ENCODE measurements at regions of chr12 and their contacts with region 1.

Region 1: DNA sequence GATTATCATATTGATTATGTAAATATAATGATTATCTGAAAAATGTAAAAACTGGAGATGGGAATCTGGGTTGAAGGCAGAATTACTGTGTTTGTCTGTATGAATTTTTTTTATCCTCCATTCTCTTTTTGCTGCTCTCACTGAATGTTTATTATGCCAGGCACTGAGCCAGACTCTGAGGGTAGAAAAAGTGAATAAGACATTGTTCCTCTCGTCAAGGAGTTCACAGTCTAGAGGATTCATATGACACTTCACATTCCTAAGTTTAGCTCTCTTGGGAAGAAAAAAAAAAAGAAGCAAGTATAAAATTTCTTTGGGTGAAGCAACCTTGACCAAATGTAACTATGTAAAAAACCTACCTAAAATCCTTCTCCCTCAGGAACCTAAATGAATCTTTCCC is 120.9 kb upstream of the LMO3 start:
- DNase-seq: peak; percentile 92
- H3K4me3 ChIP-seq: no peak overlapping the region
- H3K27ac ChIP-seq: peak overlapping the region; percentile 97
- H3K4me1 ChIP-seq: peaks cover 26% of the 10 kb centered on the region
- H3K27me3 ChIP-seq: no peaks in the 10 kb centered on the region
- CTCF ChIP-seq: no peak

Region 2: GRCh38 chr12:16094437-16094836 is 632.4 kb before region 1 on chr12:
- CTCF ChIA-PET with region 1: no interaction called
- POLR2A ChIA-PET with region 1: no interaction called
- intact Hi-C with region 1: loop called (anchors 10 kb)
- DNase-seq: no peak
- H3K4me3 ChIP-seq: no peak overlapping the region
- H3K27ac ChIP-seq: no peak overlapping the region
- H3K4me1 ChIP-seq: peaks cover 35% of the 10 kb centered on the region
- H3K27me3 ChIP-seq: no peaks in the 10 kb centered on the region
- CTCF ChIP-seq: no peak

Region 3: GRCh38 chr12:16385782-16386646 is 340.9 kb before region 1 on chr12:
- CTCF ChIA-PET with region 1: interaction called, 6 read pairs
- POLR2A ChIA-PET with region 1: no interaction called
- intact Hi-C with region 1: loop called (anchors 2 kb)
- DNase-seq: peak; percentile 91
- H3K4me3 ChIP-seq: no peak overlapping the region
- H3K27ac ChIP-seq: peak overlapping the region; percentile 48
- H3K4me1 ChIP-seq: peaks cover 13% of the 10 kb centered on the region
- H3K27me3 ChIP-seq: no peaks in the 10 kb centered on the region
- CTCF ChIP-seq: peak; percentile 75

Region 4: DNA sequence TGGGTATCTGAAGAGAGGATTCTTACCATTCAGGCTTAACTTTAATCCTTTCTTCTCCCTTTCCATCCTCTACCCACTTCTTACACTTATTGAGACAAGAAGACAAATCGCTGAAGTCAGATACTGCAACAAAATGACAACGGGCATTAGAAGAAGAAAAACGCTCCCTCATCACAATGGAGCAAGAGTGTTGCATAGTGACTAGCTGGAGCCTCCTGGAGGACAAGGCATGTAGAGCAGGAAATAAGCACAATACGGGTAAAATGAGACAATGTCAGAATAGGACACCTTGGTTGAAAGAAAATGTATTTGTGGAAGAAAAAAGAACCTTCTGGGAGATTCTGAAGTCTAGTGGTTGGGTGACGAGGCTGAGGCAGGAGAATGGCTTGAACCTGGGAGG is 862.1 kb after region 1 on chr12:
- CTCF ChIA-PET with region 1: no interaction called
- POLR2A ChIA-PET with region 1: no interaction called
- intact Hi-C with region 1: loop called (anchors 2 kb)
- DNase-seq: peak; percentile 90
- H3K4me3 ChIP-seq: peak overlapping the region; percentile 39
- H3K27ac ChIP-seq: peak overlapping the region; percentile 84
- H3K4me1 ChIP-seq: peaks cover 49% of the 10 kb centered on the region
- H3K27me3 ChIP-seq: no peaks in the 10 kb centered on the region
- CTCF ChIP-seq: peak; percentile 81

Region 5: DNA sequence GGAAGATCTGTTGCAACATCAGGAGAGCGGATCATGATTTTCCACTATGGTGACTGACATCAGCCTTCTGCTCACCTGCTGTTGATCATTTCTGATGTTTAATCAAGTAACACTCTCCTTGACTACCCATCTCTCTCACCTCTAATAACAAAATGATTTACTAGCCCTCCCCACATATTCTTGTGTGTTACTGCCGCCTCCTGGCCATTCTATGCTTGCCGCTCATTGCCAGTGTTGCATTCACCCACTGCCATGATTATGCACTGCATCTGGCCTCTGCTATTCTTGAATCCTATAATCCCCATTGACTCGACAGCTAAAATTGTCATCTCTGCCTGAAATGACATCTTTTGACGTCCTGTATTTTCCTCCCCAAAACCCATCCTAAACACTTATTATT is 1249.3 kb after region 1 on chr12:
- CTCF ChIA-PET with region 1: no interaction called
- POLR2A ChIA-PET with region 1: no interaction called
- intact Hi-C with region 1: loop called (anchors 5 kb)
- DNase-seq: peak; percentile 63
- H3K4me3 ChIP-seq: no peak overlapping the region
- H3K27ac ChIP-seq: no peak overlapping the region
- H3K4me1 ChIP-seq: no peaks in the 10 kb centered on the region
- H3K27me3 ChIP-seq: no peaks in the 10 kb centered on the region
- CTCF ChIP-seq: peak; percentile 70

Measured in A673 (cell line).